Sigmoid colon (tissue), 7 donors: ENCODE measurements at regions of chr17 and their contacts with region 1.

Region 1: DNA sequence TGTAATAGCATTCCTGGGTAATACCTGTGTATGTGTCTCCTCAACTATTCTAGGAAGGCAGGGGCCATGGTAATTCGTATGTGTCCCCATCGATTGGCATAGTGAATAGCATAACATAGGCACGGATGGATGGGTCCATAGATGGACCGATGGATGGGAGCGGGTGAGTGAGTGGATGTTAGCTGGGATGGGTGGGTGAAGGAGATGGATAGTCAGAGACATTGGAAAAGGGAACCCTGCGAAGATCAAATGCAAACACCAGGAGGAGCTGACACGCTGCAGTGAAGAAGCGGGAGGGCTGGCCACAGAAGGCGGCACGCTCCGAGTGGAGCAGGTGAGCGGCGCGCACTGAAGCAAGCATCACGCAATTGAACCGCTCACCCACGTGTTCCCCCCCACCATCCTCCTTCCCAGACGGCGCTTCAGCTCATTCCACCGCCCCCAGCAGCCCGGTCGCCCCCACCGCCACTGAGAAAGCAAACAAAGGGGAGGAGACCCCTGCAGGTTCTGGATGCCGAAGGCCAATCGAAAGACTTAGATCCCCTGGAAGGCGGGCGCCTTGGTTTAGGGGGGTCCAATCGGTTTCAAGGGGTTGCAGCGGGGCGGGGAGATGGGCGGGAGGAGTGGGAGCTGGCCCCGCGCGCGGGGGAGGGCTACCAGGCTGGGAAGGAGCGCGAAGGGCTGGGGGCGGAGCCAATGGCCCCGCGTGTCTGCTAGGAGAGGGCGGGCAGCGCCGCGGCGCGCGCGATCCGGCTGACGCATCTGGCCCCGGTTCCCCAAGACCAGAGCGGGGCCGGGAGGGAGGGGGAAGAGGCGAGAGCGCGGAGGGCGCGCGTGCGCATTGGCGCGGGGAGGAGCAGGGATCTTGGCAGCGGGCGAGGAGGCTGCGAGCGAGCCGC is at the start of gene ARRB2:
- DNase-seq: peak; percentile 99
- H3K4me3 ChIP-seq: peak within 1 kb of the TSS; percentile 73 to 84 (median 78)
- H3K27ac ChIP-seq: peak within 1 kb of the TSS; percentile 82 to 90 (median 88)
- H3K4me1 ChIP-seq: peaks cover 0 to 20% (median 14%) of the 10 kb centered on the region in 4 donors
- H3K27me3 ChIP-seq: no peaks in the 10 kb centered on the region
- CTCF ChIP-seq: peak; percentile 62 to 88 (median 70)
- EP300 ChIP-seq: no peak
- POLR2A ChIP-seq: no peak
- total RNA-seq, gene ARRB2: 22.1 to 35.7 (median 28.2) TPM

Region 2: GRCh38 chr17:4733073-4733531 is 23.1 kb after region 1 on chr17:
- intact Hi-C with region 1: loop called (anchors 2 kb)
- DNase-seq: no peak
- H3K4me3 ChIP-seq: no peak overlapping the region
- H3K27ac ChIP-seq: peak overlapping the region in 1 of 4 donors; percentile 9
- H3K4me1 ChIP-seq: peaks cover 0 to 19% (median 14%) of the 10 kb centered on the region in 4 donors
- H3K27me3 ChIP-seq: no peaks in the 10 kb centered on the region
- CTCF ChIP-seq: no peak
- EP300 ChIP-seq: no peak
- POLR2A ChIP-seq: no peak

Region 3: GRCh38 chr17:4789901-4790704 is 80.1 kb after region 1 on chr17:
- intact Hi-C with region 1: loop called (anchors 2 kb)
- DNase-seq: peak; percentile 94
- H3K4me3 ChIP-seq: peak overlapping the region; percentile 59 to 77 (median 72)
- H3K27ac ChIP-seq: peak overlapping the region; percentile 95 to 99 (median 96)
- H3K4me1 ChIP-seq: peaks cover 0 to 46% (median 41%) of the 10 kb centered on the region in 4 donors
- H3K27me3 ChIP-seq: peaks cover 0 to 9% (median 0%) of the 10 kb centered on the region in 3 donors
- CTCF ChIP-seq: peak; percentile 31 to 86 (median 74)
- EP300 ChIP-seq: no peak
- POLR2A ChIP-seq: peak; percentile 91

Region 4: DNA sequence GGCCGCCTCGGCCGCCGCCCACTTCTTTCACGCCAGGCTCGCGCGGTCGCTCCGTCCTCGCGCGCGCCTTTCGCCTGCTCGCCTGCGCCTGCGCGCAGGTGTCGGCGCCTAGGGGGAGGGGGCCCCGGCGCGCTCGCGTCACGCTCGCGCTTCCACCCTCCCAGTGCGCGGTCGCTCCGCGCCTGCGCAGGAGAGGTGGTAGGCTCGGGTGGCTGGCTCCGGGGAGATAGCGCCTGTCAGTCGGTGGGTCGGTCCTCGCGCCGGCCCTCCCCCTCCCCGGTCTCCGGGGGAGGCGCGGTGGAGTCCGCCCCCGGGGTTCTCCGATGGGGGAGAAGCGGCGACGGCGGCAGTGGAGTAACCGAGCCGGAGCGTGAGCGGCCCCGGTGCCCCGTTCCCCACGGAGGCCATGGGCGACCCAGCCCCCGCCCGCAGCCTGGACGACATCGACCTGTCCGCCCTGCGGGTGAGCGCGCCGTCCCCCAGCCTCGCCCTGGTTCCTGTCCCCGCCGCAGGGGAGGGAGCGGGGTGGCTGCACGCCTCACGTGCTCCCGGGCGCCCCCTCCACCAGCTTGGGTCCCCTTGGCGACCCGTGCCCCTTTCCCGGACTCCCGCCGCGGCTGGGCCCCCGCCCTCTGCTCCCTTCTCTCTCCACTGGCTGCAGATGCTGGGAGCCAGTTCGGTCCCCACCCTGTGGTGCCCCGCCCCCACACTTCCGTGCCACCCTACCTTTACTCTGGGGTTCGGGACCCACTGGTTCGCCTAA is 123.3 kb after region 1 on chr17 and contains the start of gene MINK1:
- intact Hi-C with region 1: loop called (anchors 5 kb)
- DNase-seq: peak; percentile 94
- H3K4me3 ChIP-seq: peak within 1 kb of the TSS; percentile 75 to 99 (median 84)
- H3K27ac ChIP-seq: peak within 1 kb of the TSS; percentile 85 to 94 (median 88)
- H3K4me1 ChIP-seq: peaks cover 0 to 34% (median 18%) of the 10 kb centered on the region in 4 donors
- H3K27me3 ChIP-seq: no peaks in the 10 kb centered on the region
- CTCF ChIP-seq: no peak
- EP300 ChIP-seq: no peak
- POLR2A ChIP-seq: peak; percentile 65 to 73
- total RNA-seq, gene MINK1: 17.1 to 43.8 (median 21.0) TPM

Region 5: GRCh38 chr17:4872786-4873185 is 162.7 kb after region 1 on chr17:
- intact Hi-C with region 1: no loop called
- DNase-seq: no peak
- H3K4me3 ChIP-seq: no peak overlapping the region
- H3K27ac ChIP-seq: no peak overlapping the region
- H3K4me1 ChIP-seq: no peaks in the 10 kb centered on the region
- H3K27me3 ChIP-seq: no peaks in the 10 kb centered on the region
- CTCF ChIP-seq: no peak
- EP300 ChIP-seq: no peak
- POLR2A ChIP-seq: no peak